ACHN (cell line): ENCODE measurements at regions of chr5 and their contacts with region 1.

Region 1: GRCh38 chr5:67182301-67182790 is 14.3 kb downstream of the CD180 start:
- DNase-seq: no peak

Region 2: GRCh38 chr5:66814146-66814991 is 368.0 kb before region 1 on chr5:
- in situ Hi-C with region 1: loop called (anchors 25 kb)
- DNase-seq: peak; percentile 40